Posterior cingulate gyrus (tissue), 11 donors: ENCODE measurements at regions of chr13 and their contacts with region 1.

Region 1: DNA sequence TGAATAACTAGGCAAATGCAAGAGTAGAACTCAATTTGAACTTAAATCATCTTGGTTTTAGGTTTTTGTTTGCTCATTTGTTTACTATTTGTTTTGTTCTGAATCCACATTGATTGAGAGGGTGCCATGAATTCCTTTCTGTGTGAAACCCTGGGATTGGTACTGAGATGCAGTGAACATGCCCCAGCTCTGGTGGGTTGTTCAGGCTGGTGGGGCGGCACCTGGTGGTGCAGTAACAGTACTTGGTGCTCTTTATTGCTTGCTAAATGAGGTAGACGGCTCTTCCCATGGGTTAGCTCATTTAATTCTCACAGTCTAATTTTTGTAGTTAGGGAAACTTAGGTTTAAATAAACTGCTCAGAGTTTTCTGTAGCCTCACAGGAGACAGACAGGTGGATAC is 48.4 kb downstream of the WASF3 start:
- DNase-seq: peak in 1 of 10 donors; percentile 11

Region 2: DNA sequence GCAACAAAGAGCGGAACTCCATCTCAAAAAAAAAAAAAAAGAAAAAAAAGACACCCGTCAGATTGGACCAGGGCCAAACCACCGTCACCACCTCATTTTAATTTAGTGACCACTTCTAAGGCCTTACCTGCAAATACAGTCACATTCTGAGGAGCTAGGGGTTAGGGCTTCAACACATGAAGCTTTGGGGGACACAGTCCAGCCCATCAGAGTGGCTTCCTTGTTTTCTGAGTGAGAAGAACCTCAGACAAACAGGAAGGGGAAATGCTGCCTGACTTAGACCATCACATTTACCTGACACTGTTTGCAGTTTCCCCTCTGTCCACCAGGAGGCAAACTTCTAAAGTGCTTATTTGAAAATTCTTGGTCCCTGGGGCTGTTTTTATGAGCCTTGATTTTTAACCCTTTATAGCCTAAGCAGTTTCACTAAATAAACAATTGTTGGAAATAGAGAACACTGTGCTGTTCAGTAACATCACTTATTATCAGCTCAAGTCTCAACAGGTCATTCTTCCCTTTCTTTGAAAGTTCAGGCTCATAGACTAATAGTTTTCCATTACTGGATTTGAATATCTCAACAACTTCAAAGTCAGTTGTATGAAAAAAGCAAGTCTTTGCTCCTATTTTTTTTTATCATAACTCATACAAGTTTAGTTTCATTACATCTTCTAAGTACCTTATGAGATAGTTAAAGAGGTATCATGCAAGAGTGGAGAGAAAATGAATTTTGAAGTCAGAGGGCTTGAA is 123.2 kb before region 1 on chr13:
- intact Hi-C with region 1: no loop called
- DNase-seq: peak in 5 of 10 donors; percentile 40 to 59 (median 49)

Region 3: DNA sequence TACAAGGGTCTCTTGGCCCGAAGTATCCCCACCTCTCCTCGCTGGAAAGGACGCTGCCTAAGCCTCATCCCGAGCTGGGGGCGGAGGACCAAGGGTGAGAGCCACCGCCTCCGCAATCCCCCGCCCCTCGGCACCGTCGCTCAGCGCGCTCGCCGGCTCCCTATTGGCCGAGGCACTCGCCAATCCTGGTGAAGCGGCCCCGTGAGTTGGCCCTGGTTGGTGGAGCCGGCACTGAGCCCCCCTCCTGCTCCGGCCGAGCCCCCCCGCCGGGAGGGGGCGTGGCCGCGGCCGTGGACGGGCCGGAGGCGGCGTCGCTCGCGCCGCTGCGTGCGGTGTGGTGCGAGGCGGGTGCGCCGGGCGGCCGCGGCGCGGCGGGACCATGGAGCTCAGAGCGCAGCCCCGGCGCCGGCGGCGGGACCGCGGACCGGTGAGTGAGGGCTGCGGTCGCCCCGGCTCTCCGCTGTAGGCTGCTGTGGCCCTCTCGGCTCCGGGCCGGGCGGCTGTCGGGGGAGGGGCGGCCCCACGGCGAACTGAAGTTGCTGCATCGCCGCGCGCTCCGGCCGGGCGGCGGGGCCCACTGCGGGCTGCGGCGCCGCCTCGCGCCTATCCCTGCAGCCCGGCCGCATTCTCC is 48.3 kb before region 1 on chr13 and contains the start of gene WASF3:
- intact Hi-C with region 1: loop called (anchors 5 kb)
- DNase-seq: peak; percentile 93 to 99 (median 97)